ENCODE measurements at regions of chr1 and their contacts with region 1.

Region 1: GRCh38 chr1:37423810-37424209 is 50.6 kb upstream of the ZC3H12A start:
- DNase-seq: no peak
- H3K4me3 ChIP-seq: no peak overlapping the region
- CTCF ChIP-seq: no peak

Region 2: DNA sequence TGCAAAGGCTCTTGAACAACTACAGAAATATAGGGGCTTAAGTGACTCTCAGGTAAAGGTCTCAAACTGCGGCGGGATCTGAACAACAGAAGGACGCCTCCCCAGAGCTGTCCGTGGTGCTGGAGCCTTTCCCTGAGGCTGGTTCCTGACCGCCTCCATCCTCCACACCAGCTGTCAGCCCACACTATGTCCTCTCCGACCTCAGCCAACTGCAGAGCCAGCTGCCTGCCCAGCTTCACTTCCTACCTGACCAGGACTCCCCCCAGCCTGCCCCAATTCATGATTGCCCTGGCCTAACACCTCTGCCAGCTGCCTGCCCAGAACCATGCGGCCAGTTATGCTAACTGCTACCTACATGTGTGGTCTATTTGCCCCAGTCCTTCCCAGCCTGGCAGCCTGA is 13.0 kb before region 1 on chr1:
- CTCF ChIA-PET with region 1: no interaction called
- POLR2A ChIA-PET with region 1: no interaction called
- DNase-seq: no peak
- H3K4me3 ChIP-seq: no peak overlapping the region
- CTCF ChIP-seq: no peak

Region 3: GRCh38 chr1:37434292-37434907 is 10.6 kb after region 1 on chr1:
- CTCF ChIA-PET with region 1: interaction called, 29 read pairs
- POLR2A ChIA-PET with region 1: no interaction called
- DNase-seq: no peak
- H3K4me3 ChIP-seq: no peak overlapping the region
- CTCF ChIP-seq: peak; percentile 97

Region 4: DNA sequence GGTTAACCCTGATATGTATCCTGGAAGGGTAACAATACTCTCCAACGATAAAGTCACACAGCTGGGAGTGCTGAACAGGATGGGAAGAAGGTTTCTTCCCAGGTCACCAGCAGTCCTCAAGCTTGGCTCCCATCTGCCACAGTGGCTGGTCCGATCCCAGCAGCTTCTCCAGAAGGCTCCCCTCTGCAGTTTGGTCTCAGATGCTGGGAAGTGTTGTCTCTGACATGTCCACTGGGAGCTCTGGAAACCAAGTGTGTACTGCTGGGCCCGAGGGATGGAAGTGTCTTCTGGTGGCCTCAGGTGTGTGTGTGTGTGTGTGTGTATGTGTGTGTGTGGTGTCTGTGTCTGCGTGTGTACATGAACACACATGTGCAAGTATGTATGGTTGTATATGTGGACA is 188.4 kb after region 1 on chr1:
- CTCF ChIA-PET with region 1: no interaction called
- POLR2A ChIA-PET with region 1: no interaction called
- DNase-seq: no peak
- H3K4me3 ChIP-seq: no peak overlapping the region
- CTCF ChIP-seq: no peak

Measured in AG04449 (cell line).